ENCODE measurements at regions of chr16 and their contacts with region 1.

Region 1: DNA sequence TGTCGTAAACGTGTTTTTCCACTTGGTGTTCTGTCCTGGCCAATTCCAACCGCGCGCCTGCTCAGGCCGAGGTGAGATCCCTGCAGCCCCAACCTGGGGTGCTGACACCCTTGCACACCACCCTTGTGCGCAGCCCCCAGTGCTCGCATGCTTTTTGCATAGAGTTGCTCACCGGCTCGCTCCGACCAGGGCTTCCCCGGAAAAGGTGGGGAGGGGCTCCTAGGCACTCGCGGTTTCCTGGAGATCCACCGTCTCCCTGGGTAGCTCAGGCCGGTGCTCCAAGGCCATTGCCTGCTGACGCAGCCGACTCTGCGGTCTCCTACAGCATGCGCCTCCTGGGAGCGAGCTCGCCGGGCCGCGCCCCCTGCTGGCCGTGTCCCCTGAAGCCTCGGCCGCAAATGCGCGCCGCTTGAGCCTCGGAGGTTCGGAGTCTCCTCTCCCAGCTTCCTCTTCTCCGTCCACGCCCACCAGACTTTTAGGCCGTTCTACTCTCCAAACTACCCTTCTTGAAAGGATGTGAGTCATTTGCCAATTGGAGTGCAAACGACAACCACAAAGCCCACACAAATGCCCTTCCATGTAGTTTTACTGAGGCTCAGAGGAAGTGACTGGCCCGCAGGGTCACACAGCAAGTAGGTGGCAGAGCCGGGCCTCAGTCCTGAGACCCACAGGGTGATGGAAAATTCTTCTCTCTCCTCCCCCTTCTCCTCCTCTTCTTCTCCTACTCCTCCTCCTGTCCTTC is 7.2 kb upstream of the PDP2 start:
- DNase-seq: peak; percentile 93
- H3K4me3 Mint-ChIP-seq: peak overlapping the region; percentile 65
- H3K27ac Mint-ChIP-seq: peak overlapping the region; percentile 83
- H3K4me1 Mint-ChIP-seq: peaks cover 42% of the 10 kb centered on the region
- H3K27me3 Mint-ChIP-seq: peaks cover 8% of the 10 kb centered on the region

Region 2: GRCh38 chr16:66608241-66609138 is 264.6 kb before region 1 on chr16:
- CTCF ChIA-PET with region 1: interaction called, 18 read pairs
- DNase-seq: peak; percentile 88
- H3K4me3 Mint-ChIP-seq: peak overlapping the region; percentile 24
- H3K27ac Mint-ChIP-seq: peak overlapping the region; percentile 86
- H3K4me1 Mint-ChIP-seq: peaks cover 37% of the 10 kb centered on the region
- H3K27me3 Mint-ChIP-seq: peaks cover 5% of the 10 kb centered on the region

Region 3: GRCh38 chr16:66740010-66740409 is 133.1 kb before region 1 on chr16:
- CTCF ChIA-PET with region 1: interaction called, 25 read pairs
- DNase-seq: peak; percentile 58
- H3K4me3 Mint-ChIP-seq: no peak overlapping the region
- H3K27ac Mint-ChIP-seq: no peak overlapping the region
- H3K4me1 Mint-ChIP-seq: peaks cover 23% of the 10 kb centered on the region
- H3K27me3 Mint-ChIP-seq: no peaks in the 10 kb centered on the region

Region 4: DNA sequence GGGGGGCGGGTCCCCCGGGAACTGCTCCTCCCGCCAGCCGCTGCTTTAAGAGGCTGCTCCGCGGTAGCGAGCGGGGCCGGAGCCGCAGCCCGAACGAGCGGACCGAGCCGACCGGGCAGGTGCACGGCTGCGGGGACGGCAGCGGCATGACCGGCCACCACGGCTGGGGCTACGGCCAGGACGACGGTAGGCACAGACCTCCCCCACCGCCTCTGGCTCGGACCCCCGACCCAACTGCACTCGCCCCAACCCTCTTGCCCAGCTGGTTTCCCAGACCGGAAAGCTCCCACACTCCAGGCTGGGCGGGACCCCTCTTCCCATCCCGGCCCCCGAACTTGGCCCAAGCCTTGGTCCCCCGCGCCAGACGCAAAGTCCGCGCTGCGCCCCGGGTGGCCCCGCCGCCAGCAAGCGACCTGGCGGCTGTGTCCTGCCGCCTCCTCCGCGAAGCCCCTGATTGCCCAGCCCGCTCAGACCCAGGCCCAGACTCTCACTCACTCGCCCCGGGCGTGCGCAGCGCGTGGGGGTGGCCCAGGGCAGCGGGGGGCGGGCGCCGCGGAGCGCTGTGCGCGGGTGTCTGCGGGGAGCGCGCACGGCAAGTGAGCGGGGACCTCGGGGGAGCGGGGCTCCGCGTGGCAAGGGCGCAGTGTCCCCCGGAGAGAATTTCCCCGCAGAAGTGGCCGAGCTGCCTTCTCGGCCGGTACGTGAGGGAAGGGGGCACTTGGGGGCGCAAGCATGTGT is 28.6 kb before region 1 on chr16 and contains the start of gene CA7:
- CTCF ChIA-PET with region 1: interaction called, 44 read pairs
- DNase-seq: no peak
- H3K4me3 Mint-ChIP-seq: peak within 1 kb of the TSS; percentile 45
- H3K27ac Mint-ChIP-seq: no peak within 1 kb of the TSS
- H3K4me1 Mint-ChIP-seq: peaks cover 23% of the 10 kb centered on the region
- H3K27me3 Mint-ChIP-seq: peaks cover 74% of the 10 kb centered on the region

Region 5: DNA sequence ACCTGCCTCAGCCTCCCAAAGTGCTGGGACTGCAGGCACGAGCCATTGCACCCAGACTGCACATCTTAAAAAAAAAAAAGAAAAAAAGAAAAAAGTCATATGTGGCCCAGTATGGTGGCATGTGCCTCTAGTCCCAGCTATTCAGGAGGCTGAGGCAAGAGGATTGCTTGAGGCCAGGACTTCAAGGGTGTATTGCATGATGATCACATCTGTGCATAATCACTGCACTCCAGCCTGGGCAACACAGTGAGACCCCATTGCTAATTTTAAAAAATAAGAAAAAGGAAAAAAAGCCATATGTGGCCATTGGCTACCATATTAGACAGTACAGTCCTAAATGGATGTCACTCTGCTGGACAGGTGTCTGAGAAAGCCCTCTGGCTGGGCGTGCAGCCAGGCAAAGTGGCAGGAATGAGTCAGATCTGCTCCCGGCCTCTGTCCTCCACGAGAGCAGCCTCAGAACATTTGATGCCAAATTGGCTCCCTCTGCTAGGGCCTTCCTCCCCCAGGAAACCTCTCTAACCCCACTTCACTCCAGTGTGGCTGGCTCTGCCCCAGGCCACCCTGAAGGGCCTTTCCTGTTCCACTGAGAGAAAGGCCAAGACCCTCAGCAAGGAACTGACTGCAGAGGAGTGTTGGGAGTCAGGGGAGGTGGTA is 14.2 kb before region 1 on chr16:
- CTCF ChIA-PET with region 1: interaction called, 31 read pairs
- DNase-seq: peak; percentile 13
- H3K4me3 Mint-ChIP-seq: no peak overlapping the region
- H3K27ac Mint-ChIP-seq: no peak overlapping the region
- H3K4me1 Mint-ChIP-seq: no peaks in the 10 kb centered on the region
- H3K27me3 Mint-ChIP-seq: peaks cover 23% of the 10 kb centered on the region